ENCODE measurements at regions of chr2 and their contacts with region 1.

Region 1: GRCh38 chr2:96951093-96951654 is 35.2 kb downstream of the FAM178B start:
- DNase-seq: peak; percentile 64 to 89 (median 78)
- ATAC-seq: peak; percentile 97
- H3K4me3 ChIP-seq: no peak overlapping the region
- H3K4me3 Mint-ChIP-seq: no peak overlapping the region
- H3K27ac ChIP-seq: no peak overlapping the region
- H3K27ac Mint-ChIP-seq: no peak overlapping the region
- H3K4me1 ChIP-seq: peaks cover 27% of the 10 kb centered on the region
- H3K4me1 Mint-ChIP-seq: peaks cover 20% of the 10 kb centered on the region
- H3K27me3 ChIP-seq: no peaks in the 10 kb centered on the region
- H3K27me3 Mint-ChIP-seq: no peaks in the 10 kb centered on the region
- CTCF ChIP-seq: peak; percentile 90

Region 2: DNA sequence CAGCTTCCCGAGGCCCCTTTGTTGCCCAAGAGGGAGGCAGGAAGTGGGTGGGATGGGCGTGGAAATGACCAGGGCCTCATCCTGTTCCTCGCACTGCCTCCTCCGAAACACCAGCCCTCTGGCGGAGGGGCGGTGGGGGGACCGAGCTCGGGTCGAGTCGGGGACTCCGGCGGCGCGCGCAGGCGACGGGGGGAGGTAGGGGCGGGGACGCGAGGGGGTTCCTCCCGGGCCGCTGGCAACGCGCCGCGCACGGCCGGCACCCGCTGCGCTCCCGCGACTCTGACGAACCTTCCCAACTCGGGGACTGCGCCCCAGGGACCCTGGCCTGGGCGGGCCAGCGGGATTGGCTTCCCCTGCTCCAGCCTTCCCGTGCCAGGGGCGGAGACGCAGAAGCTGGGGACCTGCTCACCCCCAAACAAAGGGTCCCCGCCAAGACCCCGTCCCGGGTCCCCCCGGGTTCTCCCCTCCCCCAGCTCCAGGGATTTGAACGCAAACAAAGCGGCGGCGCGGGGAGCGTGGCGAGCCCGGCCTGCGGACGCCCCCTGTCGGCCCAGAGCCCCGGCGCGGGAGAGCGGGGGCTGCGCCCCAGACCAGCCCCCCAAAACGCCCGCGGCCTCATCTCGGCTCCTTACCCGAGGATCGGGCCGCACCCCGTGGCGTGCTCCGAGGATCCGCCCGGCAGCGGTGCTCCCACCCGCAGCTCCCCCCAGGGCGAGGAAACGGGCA is 82.5 kb before region 1 on chr2:
- CTCF ChIA-PET with region 1: interaction called, 7 read pairs
- POLR2A ChIA-PET with region 1: interaction called, 11 read pairs
- intact Hi-C with region 1: loop called in 1 of 2 experiments (anchors 2 kb)
- DNase-seq: peak; percentile 25 to 78 (median 55)
- ATAC-seq: peak; percentile 24
- H3K4me3 ChIP-seq: peak overlapping the region; percentile 80
- H3K4me3 Mint-ChIP-seq: peak overlapping the region; percentile 92
- H3K27ac ChIP-seq: peak overlapping the region; percentile 66 to 69
- H3K27ac Mint-ChIP-seq: peak overlapping the region; percentile 85
- H3K4me1 ChIP-seq: peaks cover 55% of the 10 kb centered on the region
- H3K4me1 Mint-ChIP-seq: peaks cover 49% of the 10 kb centered on the region
- H3K27me3 ChIP-seq: no peaks in the 10 kb centered on the region
- H3K27me3 Mint-ChIP-seq: no peaks in the 10 kb centered on the region
- CTCF ChIP-seq: peak; percentile 72

Region 3: DNA sequence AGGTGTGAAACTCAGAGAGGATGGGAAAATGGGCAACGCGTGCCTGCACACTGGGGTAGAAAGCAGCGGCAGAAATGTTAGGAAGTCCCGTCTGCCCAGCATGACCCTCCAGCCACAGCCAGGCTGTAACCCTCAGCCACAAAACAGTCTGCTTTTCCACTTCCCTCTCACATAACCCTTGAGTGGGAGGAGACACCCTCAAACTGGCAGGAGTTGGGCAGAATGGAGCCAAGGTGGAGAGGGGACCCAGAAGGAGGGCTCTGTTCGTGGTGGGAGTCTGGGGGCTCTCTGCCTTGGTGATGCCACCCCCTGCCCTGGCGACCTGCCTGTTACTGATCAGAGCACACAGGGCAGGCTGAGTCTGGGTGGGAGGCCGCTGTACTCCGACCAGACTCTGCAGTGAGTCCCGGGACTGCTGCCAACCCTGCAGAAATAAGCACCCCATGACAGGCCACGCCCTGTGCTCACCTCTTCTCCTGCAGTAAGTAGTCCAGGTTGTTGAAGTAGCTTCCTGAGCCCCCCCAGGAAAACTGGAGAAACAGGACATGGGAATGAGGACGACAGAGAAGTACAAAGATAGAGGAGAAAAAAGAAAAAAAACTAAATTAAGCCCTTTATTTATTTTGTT is 19.2 kb after region 1 on chr2:
- CTCF ChIA-PET with region 1: no interaction called
- POLR2A ChIA-PET with region 1: no interaction called
- intact Hi-C with region 1: no loop called
- DNase-seq: no peak
- ATAC-seq: no peak
- H3K4me3 ChIP-seq: no peak overlapping the region
- H3K4me3 Mint-ChIP-seq: no peak overlapping the region
- H3K27ac ChIP-seq: no peak overlapping the region
- H3K27ac Mint-ChIP-seq: no peak overlapping the region
- H3K4me1 ChIP-seq: peaks cover 30% of the 10 kb centered on the region
- H3K4me1 Mint-ChIP-seq: peaks cover 48% of the 10 kb centered on the region
- H3K27me3 ChIP-seq: no peaks in the 10 kb centered on the region
- H3K27me3 Mint-ChIP-seq: peaks cover 5% of the 10 kb centered on the region
- CTCF ChIP-seq: no peak

Measured in CD4-positive, alpha-beta T cell (primary cell).